CD4-positive, alpha-beta T cell (primary cell): ENCODE measurements at regions of chr14 and their contacts with region 1.

Region 1: DNA sequence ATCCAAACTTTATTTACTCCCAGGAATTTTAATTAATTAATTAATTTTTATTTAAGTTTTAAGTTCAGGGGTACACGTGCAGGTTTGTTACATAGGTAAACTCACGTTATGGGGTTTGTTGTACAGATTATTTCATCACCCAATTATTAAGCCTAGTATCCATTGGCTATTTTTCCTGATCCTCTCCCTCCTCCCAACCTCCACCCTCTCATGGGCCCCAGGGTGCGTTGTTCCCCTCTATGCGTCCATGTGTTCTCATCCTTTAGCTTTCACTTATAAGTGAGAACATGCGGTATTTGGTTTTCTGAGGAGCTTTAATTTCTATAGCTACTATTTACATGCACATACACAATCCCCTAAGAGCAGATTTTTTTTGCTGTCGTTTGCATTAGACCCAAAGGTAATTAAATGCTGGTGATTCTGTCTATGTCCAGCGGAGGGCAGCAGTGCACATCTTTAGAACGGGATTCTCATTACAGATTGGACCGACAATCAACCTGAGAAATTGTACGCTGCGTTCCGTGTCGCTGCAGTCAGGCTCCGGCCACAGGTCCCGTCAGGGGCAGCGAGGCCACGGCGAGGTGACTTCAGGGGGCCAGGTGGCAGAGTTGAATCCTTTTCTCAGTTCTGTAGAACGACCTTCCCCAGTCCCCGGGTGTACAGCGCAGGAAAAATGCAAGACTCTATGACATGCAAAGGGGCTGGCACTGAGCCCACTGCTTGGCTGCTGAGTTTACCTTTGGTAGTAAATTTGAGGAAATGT is 11.6 kb downstream of the TMEM30B start:
- DNase-seq: peak; percentile 61 to 88 (median 71)
- ATAC-seq: peak; percentile 97
- H3K4me3 ChIP-seq: peak overlapping the region; percentile 17
- H3K4me3 Mint-ChIP-seq: peak overlapping the region; percentile 42
- H3K27ac ChIP-seq: no peak overlapping the region
- H3K27ac Mint-ChIP-seq: no peak overlapping the region
- H3K4me1 ChIP-seq: peaks cover 6% of the 10 kb centered on the region
- H3K4me1 Mint-ChIP-seq: peaks cover 5% of the 10 kb centered on the region
- H3K27me3 ChIP-seq: peaks cover 4 to 25% of the 10 kb centered on the region in 2 experiments
- H3K27me3 Mint-ChIP-seq: peaks cover 60% of the 10 kb centered on the region
- CTCF ChIP-seq: peak; percentile 82

Region 2: DNA sequence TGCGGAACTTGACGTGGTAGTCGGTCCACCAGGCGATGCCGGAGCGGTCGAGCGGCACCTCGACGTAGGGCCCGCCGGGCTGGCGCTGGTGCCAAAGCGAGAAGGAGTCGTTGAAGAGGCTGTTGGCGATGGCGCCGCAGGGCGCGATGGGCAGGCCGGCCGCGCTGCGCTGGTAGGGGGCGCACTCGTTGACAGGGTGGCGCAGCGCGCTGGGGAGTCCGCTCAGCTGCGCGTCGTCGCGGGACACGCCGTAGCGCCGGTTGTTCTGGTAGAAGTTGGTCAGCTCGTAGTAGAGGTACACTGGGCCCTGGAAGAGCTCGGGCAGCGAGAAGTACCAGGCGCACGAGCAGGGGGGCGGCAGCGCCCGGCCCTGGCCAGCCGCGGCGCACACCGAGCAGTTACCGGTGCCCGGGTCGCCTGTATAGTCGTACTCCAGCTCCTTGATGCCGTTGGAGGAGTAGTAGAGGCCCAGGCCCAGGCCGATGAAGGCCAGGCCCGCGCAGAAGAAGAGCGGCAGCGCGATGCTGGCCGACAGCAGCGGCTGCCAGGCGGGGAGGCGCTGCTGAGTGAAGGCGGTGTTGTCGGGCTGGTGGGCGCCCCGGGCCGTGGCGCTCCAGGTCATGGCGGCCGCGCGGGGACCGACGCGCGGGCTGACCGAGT is 11.2 kb after region 1 on chr14:
- CTCF ChIA-PET with region 1: interaction called, 10 read pairs
- POLR2A ChIA-PET with region 1: interaction called, 3 read pairs
- intact Hi-C with region 1: loop called in 1 of 2 experiments (anchors 1 kb)
- DNase-seq: peak; percentile 53 to 91 (median 80)
- ATAC-seq: peak; percentile 84
- H3K4me3 ChIP-seq: peak overlapping the region; percentile 63
- H3K4me3 Mint-ChIP-seq: peak overlapping the region; percentile 96
- H3K27ac ChIP-seq: peak overlapping the region in 1 of 2 donors; percentile 60
- H3K27ac Mint-ChIP-seq: peak overlapping the region; percentile 94
- H3K4me1 ChIP-seq: peaks cover 24% of the 10 kb centered on the region
- H3K4me1 Mint-ChIP-seq: peaks cover 28% of the 10 kb centered on the region
- H3K27me3 ChIP-seq: no peaks in the 10 kb centered on the region
- H3K27me3 Mint-ChIP-seq: no peaks in the 10 kb centered on the region
- CTCF ChIP-seq: peak; percentile 74

Region 3: DNA sequence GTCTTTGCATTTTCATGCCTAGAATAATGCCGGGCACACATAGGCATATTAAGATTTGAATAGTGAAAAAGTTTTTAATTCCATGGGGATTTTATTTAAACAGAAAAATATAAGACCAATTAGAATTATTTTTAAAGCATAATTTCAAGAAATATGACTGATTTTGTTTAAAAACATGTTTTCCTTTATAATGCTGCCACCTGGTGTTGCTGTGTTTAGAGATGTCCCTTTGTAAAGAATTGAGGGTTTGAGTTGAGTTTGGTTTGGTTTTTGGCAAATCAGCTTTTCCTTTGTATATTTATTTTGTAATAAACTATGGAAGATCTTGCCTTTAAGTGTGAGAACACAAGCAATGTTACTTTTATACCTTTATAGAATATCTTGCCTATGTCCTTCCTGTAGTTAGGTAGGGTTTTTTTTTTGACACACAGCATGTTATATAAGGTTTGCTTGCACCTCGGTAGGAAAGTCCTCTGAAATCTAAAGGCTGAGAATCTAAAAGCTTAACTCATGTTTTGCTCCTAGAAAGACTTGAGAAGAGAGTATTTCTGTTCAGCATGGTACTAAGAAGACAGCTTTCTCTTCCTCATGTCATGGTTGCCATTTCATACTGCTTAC is 461.4 kb after region 1 on chr14:
- CTCF ChIA-PET with region 1: no interaction called
- POLR2A ChIA-PET with region 1: no interaction called
- intact Hi-C with region 1: loop called in 1 of 2 experiments (anchors 1 kb)
- DNase-seq: peak in 4 of 14 experiments; percentile 38 to 61 (median 55)
- ATAC-seq: no peak
- H3K4me3 ChIP-seq: no peak overlapping the region
- H3K4me3 Mint-ChIP-seq: no peak overlapping the region
- H3K27ac ChIP-seq: peak overlapping the region in 1 of 2 donors; percentile 2
- H3K27ac Mint-ChIP-seq: peak overlapping the region; percentile 27
- H3K4me1 ChIP-seq: no peaks in the 10 kb centered on the region
- H3K4me1 Mint-ChIP-seq: peaks cover 38% of the 10 kb centered on the region
- H3K27me3 ChIP-seq: no peaks in the 10 kb centered on the region
- H3K27me3 Mint-ChIP-seq: no peaks in the 10 kb centered on the region
- CTCF ChIP-seq: peak; percentile 87

Region 4: GRCh38 chr14:61837336-61838229 is 568.1 kb after region 1 on chr14:
- CTCF ChIA-PET with region 1: interaction called, 7 read pairs
- POLR2A ChIA-PET with region 1: no interaction called
- intact Hi-C with region 1: loop called (anchors 1 kb)
- DNase-seq: peak; percentile 54 to 88 (median 68)
- ATAC-seq: peak; percentile 99
- H3K4me3 ChIP-seq: no peak overlapping the region
- H3K4me3 Mint-ChIP-seq: no peak overlapping the region
- H3K27ac ChIP-seq: no peak overlapping the region
- H3K27ac Mint-ChIP-seq: no peak overlapping the region
- H3K4me1 ChIP-seq: no peaks in the 10 kb centered on the region
- H3K4me1 Mint-ChIP-seq: no peaks in the 10 kb centered on the region
- H3K27me3 ChIP-seq: no peaks in the 10 kb centered on the region
- H3K27me3 Mint-ChIP-seq: peaks cover 6% of the 10 kb centered on the region
- CTCF ChIP-seq: peak; percentile 96

Region 5: DNA sequence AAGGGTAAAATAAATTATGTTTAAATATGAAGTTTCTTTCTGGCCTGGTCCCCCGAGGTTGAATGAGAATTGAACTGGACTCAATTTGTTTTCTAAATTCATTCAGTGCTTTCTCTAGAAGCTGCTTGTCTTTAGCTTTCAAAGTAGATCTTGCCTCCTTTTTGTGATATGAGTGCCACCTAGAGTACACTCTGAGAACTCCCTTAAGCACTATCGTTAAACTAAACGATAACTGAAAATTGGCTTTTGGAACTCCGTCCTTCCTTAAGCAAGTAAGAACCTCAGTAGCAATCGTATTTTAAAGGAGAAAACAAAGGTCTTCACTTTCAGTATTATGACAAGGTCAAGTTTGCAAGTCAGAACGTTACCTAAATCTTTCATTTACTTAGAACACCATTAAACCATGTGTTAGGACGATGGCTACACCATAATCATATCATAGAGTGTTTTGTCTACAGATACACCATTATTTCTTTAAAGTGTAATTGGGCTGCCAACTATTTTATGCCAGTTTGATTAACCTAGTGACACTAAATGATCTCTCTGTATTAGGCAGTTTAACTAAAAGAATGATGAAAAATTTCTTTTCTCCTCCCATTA is 857.5 kb after region 1 on chr14:
- CTCF ChIA-PET with region 1: no interaction called
- POLR2A ChIA-PET with region 1: no interaction called
- intact Hi-C with region 1: loop called (anchors 1 to 2 kb)
- DNase-seq: peak in 3 of 14 experiments; percentile 53 to 60 (median 58)
- ATAC-seq: peak; percentile 75
- H3K4me3 ChIP-seq: no peak overlapping the region
- H3K4me3 Mint-ChIP-seq: no peak overlapping the region
- H3K27ac ChIP-seq: no peak overlapping the region
- H3K27ac Mint-ChIP-seq: no peak overlapping the region
- H3K4me1 ChIP-seq: no peaks in the 10 kb centered on the region
- H3K4me1 Mint-ChIP-seq: no peaks in the 10 kb centered on the region
- H3K27me3 ChIP-seq: peaks cover 6 to 13% of the 10 kb centered on the region in 2 experiments
- H3K27me3 Mint-ChIP-seq: peaks cover 71% of the 10 kb centered on the region
- CTCF ChIP-seq: peak; percentile 74